SK-N-SH (cell line): ENCODE measurements at regions of chr4 and their contacts with region 1.

Region 1: DNA sequence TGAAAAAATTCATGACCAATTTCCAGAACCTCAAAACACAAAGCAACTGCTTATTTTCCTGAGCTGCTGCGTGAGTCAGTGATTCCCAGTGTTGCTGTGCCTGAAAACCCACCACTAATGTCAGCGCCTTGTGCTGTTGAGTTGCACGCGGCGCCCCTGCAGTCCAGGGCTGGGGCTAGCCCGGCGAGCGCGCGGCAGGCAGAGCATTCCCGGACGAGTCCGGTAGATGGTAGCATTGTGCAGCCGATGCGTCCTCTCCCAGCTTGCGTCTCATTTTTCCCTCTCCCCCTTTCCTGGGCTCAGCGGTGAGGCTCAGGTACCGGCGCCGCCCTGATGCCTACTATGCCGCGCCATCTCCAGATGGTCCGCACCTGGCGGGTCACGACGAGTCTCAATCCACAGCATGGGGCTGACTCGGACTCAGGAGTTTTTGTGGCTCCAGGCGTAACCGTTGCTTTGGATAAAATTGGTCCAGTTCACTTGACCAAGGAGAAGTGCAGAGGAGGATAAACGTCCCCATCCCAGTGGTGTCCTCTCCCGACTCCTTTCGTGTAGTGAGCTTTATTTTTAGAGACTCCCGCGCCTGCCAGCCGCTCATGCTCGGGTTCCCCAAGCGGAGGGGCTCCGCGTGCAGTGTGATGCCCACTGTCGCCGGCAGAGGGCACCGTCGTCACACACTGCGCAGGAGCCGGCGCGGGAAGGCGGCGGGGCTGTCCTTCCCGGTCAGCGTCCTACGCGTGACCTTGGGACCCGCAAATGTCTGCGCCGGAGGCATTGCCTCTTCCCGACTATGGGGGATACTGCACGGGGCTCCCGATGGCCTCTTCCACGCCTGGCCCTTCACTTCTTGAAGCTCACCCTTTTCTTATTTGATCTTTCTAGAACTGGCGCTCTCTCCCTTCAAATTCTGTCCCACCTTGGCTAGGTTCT is 53.6 kb upstream of the IGFBP7 start:
- DNase-seq: peak; percentile 89
- H3K4me3 ChIP-seq: peak overlapping the region; percentile 70 to 91
- H3K27ac ChIP-seq: peak overlapping the region; percentile 71 to 78
- H3K4me1 ChIP-seq: peaks cover 3 to 9% of the 10 kb centered on the region in 2 experiments; a peak in 3 of 4 replicates
- H3K27me3 ChIP-seq: no peaks in the 10 kb centered on the region
- CTCF ChIP-seq: peak; percentile 74
- EP300 ChIP-seq: no peak
- RAD21 ChIP-seq: peak; percentile 91

Region 2: GRCh38 chr4:56907489-56908205 is 256.1 kb before region 1 on chr4 and contains the start of gene REST:
- CTCF ChIA-PET with region 1: no interaction called
- POLR2A ChIA-PET with region 1: no interaction called
- DNase-seq: peak; percentile 92
- H3K4me3 ChIP-seq: peak within 1 kb of the TSS; percentile 88 to 90
- H3K27ac ChIP-seq: peak within 1 kb of the TSS; percentile 82 to 83
- H3K4me1 ChIP-seq: peaks cover 0 to 11% of the 10 kb centered on the region in 2 experiments; a peak in 2 of 4 replicates
- H3K27me3 ChIP-seq: no peaks in the 10 kb centered on the region
- CTCF ChIP-seq: no peak
- EP300 ChIP-seq: no peak
- RAD21 ChIP-seq: no peak
- polyA plus RNA-seq, gene REST: 6.0 and 7.9 TPM in 2 replicates

Region 3: GRCh38 chr4:57020467-57021101 is 143.2 kb before region 1 on chr4:
- CTCF ChIA-PET with region 1: interaction called, 12 read pairs
- POLR2A ChIA-PET with region 1: no interaction called
- DNase-seq: no peak
- H3K4me3 ChIP-seq: no peak overlapping the region
- H3K27ac ChIP-seq: peak overlapping the region in 1 of 2 experiments; percentile 68; a peak in 2 of 4 replicates
- H3K4me1 ChIP-seq: peaks cover 0 to 4% of the 10 kb centered on the region in 2 experiments; a peak in 1 of 4 replicates
- H3K27me3 ChIP-seq: no peaks in the 10 kb centered on the region
- CTCF ChIP-seq: no peak
- EP300 ChIP-seq: no peak
- RAD21 ChIP-seq: no peak

Region 4: GRCh38 chr4:57071326-57071725 is 92.5 kb before region 1 on chr4:
- CTCF ChIA-PET with region 1: interaction called, 15 read pairs
- POLR2A ChIA-PET with region 1: no interaction called
- DNase-seq: no peak
- H3K4me3 ChIP-seq: no peak overlapping the region
- H3K27ac ChIP-seq: no peak overlapping the region
- H3K4me1 ChIP-seq: peaks cover 0 to 12% of the 10 kb centered on the region in 2 experiments; a peak in 2 of 4 replicates
- H3K27me3 ChIP-seq: no peaks in the 10 kb centered on the region
- CTCF ChIP-seq: no peak
- EP300 ChIP-seq: no peak
- RAD21 ChIP-seq: no peak

Region 5: DNA sequence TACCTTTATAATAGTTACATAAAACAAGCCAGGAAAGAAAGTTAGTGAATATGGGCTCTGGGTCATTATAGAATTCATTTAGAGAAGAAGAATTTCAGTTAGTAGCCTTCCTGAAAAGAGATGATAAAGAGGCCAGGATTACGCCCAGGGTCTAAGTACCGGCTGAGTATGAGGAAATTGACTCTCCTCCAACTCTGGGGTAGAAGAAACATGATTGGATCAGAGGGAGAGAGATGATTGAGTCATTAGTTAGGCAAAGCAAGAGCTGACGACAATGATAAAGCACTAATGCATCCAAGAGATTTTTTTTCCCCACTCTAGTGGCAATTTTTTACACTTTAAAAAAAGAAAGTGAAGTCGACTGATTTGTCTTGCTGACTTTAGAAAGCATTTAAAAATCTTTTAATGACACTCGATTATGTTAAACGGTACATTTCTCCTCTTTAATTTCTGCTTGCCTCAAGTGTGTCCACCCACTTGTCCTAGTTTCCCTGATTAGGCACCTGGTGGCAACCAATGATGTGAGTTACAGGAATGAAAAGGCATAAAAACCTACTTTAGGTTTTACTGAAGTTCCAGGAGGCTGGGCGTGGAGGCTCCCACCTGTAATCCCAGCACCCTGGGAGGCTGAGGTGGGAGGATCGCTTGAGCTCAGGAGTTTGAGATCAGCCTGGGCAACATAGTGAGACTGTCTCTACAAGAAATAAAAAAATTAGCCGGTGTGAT is 16.3 kb before region 1 on chr4:
- CTCF ChIA-PET with region 1: interaction called, 42 read pairs
- POLR2A ChIA-PET with region 1: no interaction called
- DNase-seq: no peak
- H3K4me3 ChIP-seq: no peak overlapping the region
- H3K27ac ChIP-seq: peak overlapping the region in 1 of 2 experiments; percentile 90; a peak in 2 of 4 replicates
- H3K4me1 ChIP-seq: peaks cover 0 to 35% of the 10 kb centered on the region in 2 experiments; a peak in 2 of 4 replicates
- H3K27me3 ChIP-seq: no peaks in the 10 kb centered on the region
- CTCF ChIP-seq: no peak
- EP300 ChIP-seq: no peak
- RAD21 ChIP-seq: no peak

Region 6: DNA sequence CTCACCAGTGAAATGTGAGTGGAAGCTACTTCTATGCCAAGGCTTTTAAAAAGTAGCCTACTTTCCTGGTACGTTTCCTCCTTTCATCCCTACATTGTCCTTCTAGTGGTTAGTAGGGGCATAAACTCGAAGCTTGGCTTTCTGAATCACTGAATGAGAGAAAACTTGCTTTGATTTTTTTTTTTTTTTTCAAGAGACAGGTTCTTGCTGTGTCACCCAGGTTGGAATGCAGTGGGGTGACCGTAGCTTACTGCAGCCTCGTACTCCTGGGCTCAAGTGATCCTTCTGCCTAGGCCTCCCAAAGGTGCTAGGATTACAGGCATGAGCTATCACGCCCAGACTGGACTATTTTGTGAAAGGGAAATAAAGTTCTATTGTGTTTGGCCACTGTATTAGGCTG is 35.5 kb after region 1 on chr4:
- CTCF ChIA-PET with region 1: interaction called, 34 read pairs
- POLR2A ChIA-PET with region 1: no interaction called
- DNase-seq: no peak
- H3K4me3 ChIP-seq: no peak overlapping the region
- H3K27ac ChIP-seq: no peak overlapping the region
- H3K4me1 ChIP-seq: no peaks in the 10 kb centered on the region
- H3K27me3 ChIP-seq: no peaks in the 10 kb centered on the region
- CTCF ChIP-seq: no peak
- EP300 ChIP-seq: no peak
- RAD21 ChIP-seq: no peak

Region 7: DNA sequence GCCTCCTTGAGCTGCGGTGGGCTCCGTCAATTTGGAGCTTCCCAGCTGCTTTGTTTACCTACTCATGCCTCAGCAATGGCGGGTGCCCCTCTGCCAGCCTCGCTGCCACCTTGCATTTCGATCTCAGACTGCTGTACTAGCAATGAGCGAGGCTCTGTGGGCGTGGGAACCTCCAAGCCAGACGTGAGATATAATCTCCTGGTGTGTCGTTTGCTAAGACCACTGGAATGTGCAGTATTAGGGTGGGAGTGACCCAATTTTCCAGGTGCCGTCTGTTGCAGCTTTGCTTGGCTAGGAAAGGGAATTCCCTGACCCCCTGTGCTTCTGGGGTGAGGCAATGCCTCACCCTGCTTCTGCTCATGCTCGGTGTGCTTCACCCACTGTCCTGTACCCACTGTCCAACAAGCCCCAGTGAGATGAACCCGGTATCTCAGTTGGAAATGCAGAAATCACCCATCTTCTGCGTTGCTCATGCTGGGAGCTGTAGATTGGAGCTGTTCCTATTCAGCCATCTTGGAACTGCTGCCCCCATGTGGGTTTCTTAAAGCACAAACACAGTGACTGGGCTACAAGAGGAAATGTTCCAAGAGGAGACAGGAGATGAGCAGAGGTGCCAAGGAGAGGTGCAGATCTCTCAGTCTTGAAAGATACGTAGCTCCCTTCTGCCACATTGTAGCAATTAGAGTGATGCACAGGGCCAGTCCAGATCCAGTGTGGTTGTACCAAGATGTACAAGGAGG is 139.4 kb after region 1 on chr4:
- CTCF ChIA-PET with region 1: interaction called, 24 read pairs
- POLR2A ChIA-PET with region 1: no interaction called
- DNase-seq: no peak
- H3K4me3 ChIP-seq: no peak overlapping the region
- H3K27ac ChIP-seq: no peak overlapping the region
- H3K4me1 ChIP-seq: no peaks in the 10 kb centered on the region
- H3K27me3 ChIP-seq: no peaks in the 10 kb centered on the region
- CTCF ChIP-seq: no peak; the same call in 1 of the 2 replicates
- EP300 ChIP-seq: no peak
- RAD21 ChIP-seq: 0 out of 2 replicates have a peak, but pooled peaks have one; percentile 17

Region 8: DNA sequence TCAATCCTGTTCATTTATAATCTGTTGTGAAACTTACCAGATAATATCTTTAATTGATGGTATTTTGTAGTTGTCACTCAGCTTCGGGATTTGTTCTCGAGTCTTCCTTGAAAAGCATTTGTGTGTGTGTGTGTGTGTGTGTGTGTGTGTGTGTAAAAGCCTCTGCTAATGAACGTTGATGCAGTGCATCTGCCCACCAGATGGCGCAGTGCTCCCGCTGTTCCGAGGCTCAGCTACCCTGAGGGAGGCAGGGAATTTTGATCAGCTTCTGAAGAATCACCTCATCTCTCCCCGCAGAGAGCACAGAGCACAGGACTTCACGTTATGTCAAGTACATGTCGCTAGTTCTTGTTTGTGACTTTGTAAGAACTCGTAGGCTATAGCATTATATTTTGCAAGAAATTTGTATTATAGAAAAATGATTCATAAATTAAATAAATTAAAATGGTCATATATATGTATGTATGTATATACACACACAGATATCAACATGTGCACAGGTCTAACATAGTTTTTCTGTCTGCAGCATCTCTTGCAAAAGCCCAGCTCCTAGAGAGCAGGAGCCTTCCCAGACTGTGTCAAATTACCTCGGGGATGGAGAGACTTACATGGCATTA is 263.1 kb after region 1 on chr4:
- CTCF ChIA-PET with region 1: interaction called, 67 read pairs
- POLR2A ChIA-PET with region 1: no interaction called
- DNase-seq: peak; percentile 66
- H3K4me3 ChIP-seq: peak overlapping the region in 1 of 2 experiments; percentile 30; a peak in 1 of 4 replicates
- H3K27ac ChIP-seq: no peak overlapping the region
- H3K4me1 ChIP-seq: peaks cover 3 to 18% of the 10 kb centered on the region in 2 experiments; a peak in 2 of 4 replicates
- H3K27me3 ChIP-seq: no peaks in the 10 kb centered on the region
- CTCF ChIP-seq: peak; percentile 87
- EP300 ChIP-seq: no peak
- RAD21 ChIP-seq: peak; percentile 88